Kidney (tissue), 22 donors: ENCODE measurements at regions of chr10 and their contacts with region 1.

Region 1: DNA sequence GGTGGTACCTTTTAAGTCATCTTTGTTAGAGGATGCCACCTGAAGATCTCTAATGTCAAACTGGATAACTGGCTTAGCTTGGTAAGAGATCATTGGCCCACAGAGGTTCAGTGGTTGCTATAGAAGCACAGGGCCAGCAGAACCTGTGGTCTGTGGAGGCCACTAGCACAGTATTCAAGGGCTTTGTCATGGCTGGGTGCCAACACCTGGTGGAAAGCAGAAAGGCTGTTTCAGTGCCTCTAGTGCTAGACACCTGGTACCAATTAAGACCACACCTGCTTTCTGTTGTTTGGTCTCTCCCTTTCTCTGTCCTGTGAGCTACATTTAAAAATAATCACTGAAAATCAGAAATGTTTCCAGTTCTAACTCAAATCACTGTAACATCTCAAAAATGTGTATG is 10.0 kb upstream of the PCGF5 start:
- DNase-seq: peak in 2 of 5 donors; percentile 23 to 30
- H3K4me3 ChIP-seq: no peak overlapping the region
- H3K27ac ChIP-seq: no peak overlapping the region
- H3K4me1 ChIP-seq: no peaks in the 10 kb centered on the region
- H3K27me3 ChIP-seq: no peaks in the 10 kb centered on the region
- CTCF ChIP-seq: no peak

Region 2: DNA sequence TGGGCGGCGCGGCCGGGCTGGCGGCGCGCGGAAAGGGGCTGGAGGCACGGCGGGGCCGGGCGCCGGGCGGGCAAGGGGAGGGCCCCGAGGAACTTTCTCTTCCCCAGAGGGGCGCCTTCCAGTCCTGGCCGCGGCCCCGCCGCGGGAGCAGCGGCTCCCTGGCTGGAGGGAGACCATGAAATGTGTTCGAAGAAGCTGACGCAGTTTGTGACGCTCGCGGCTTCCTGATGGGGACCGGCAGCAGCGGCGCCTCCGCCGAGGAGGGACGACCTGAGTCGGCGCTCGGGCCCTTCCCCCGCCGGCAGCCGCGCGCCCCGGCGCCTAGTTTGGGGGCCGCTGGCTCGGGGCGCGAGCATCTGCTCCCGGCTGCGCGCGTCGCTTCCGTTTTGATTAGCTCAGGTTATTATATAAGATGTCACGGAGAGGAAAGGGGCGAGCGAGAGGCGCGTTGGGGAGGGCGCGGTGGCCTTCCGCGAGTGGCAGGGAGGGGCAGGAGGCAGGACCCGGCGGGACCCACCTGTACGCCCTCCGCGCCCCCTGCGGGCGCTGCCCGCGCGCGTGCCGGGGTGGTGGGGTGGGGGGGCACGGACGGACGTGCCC is 47.1 kb before region 1 on chr10:
- intact Hi-C with region 1: loop called (anchors 10 kb)
- DNase-seq: peak; percentile 64 to 93 (median 79)
- H3K4me3 ChIP-seq: peak overlapping the region; percentile 42 to 81 (median 69)
- H3K27ac ChIP-seq: peak overlapping the region; percentile 84 to 96
- H3K4me1 ChIP-seq: peaks cover 0 to 17% (median 4%) of the 10 kb centered on the region in 3 donors
- H3K27me3 ChIP-seq: no peaks in the 10 kb centered on the region
- CTCF ChIP-seq: peak; percentile 4